Pancreas (tissue), 10 donors: ENCODE measurements at regions of chr1 and their contacts with region 1.

Region 1: DNA sequence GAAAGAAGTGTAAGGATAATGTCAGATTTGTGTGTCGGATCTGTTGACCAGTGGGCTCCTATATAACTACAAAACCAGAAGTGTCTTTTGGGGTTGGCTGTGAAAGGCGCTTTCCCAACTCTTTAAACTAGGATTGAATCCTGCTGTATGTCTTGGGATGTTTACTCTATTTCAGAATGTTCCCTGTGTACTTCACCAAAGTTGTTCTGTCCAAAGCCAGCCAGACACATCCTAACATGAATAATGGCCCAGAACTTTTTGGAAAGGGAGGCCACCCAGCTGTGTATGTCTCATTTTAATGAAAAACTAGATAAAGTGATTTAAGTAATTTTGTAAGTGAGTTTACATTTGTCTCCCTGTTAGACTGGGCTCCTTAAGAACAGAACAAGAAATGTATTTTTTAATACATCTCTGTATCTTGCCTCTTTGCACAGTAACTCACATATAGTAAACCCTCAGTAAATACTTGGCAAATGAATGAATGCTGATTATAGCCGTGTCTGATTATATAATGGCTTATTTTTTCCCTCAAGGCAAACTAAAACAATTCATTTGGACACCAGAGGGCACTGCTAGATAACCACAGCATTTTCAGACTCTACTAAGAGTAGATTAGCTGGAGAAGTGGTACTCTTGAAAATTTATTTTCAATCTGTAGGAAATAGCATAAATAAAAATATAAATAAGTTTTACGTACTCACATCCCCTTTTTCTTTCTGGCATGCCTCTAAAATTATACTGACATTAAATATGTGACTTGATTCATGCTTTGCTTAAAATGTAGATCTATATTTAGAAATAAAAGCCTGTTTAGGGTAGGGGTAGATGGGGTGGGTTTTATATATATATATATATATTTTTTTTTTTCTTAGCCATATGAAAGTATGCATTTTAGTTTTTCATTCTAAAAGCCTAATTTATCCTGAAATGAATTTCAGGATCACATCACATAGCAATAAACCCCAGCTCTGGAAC is 23.8 kb downstream of the TSEN15 start:
- DNase-seq: peak in 3 of 6 donors; percentile 10 to 32 (median 17)
- ATAC-seq: peak; percentile 61 to 94 (median 90)
- H3K4me3 ChIP-seq: no peak overlapping the region
- H3K27ac ChIP-seq: no peak overlapping the region
- H3K4me1 ChIP-seq: no peaks in the 10 kb centered on the region
- H3K27me3 ChIP-seq: no peaks in the 10 kb centered on the region
- CTCF ChIP-seq: peak; percentile 22 to 50 (median 33)

Region 2: GRCh38 chr1:184222652-184223052 is 147.3 kb after region 1 on chr1:
- intact Hi-C with region 1: loop called in 2 of 3 experiments (anchors 5 to 10 kb)
- DNase-seq: peak in 5 of 6 donors; percentile 21 to 72 (median 60)
- ATAC-seq: peak; percentile 64 to 97 (median 88)
- H3K4me3 ChIP-seq: peak overlapping the region in 1 of 4 donors; percentile 3
- H3K27ac ChIP-seq: no peak overlapping the region
- H3K4me1 ChIP-seq: no peaks in the 10 kb centered on the region
- H3K27me3 ChIP-seq: no peaks in the 10 kb centered on the region
- CTCF ChIP-seq: peak; percentile 87 to 96 (median 88)